Activated B cell treated with CpG ODN at 0.5 μM for 24 hours (primary cell): ENCODE measurements at regions of chr6 and their contacts with region 1.

Region 1: DNA sequence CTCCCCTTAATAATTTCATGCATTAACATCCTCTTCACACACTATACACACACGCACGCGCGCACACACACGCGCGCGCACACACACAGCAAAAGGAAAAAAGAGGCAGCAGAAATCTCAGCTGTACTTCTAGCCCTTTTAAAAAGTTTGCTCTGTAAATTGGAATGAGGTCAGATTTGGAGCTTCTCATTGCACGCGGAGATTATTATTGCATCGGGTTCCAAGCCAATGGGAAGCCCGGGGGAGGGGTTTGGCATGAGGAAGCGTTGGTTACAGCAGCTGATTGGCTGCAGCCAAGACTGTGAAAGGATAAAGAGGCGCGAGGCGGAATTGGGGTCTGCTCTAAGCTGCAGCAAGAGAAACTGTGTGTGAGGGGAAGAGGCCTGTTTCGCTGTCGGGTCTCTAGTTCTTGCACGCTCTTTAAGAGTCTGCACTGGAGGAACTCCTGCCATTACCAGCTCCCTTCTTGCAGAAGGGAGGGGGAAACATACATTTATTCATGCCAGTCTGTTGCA is at the start of gene SOX4:
- DNase-seq: peak; percentile 62
- ATAC-seq: peak; percentile 82
- H3K4me3 Mint-ChIP-seq: no peak within 1 kb of the TSS
- H3K27ac Mint-ChIP-seq: peak within 1 kb of the TSS; percentile 84
- H3K4me1 Mint-ChIP-seq: peaks cover 25% of the 10 kb centered on the region
- H3K27me3 Mint-ChIP-seq: peaks cover 3% of the 10 kb centered on the region
- CTCF ChIP-seq: no peak
- total RNA-seq, gene SOX4: 3.4 and 3.5 TPM in 2 replicates

Region 2: DNA sequence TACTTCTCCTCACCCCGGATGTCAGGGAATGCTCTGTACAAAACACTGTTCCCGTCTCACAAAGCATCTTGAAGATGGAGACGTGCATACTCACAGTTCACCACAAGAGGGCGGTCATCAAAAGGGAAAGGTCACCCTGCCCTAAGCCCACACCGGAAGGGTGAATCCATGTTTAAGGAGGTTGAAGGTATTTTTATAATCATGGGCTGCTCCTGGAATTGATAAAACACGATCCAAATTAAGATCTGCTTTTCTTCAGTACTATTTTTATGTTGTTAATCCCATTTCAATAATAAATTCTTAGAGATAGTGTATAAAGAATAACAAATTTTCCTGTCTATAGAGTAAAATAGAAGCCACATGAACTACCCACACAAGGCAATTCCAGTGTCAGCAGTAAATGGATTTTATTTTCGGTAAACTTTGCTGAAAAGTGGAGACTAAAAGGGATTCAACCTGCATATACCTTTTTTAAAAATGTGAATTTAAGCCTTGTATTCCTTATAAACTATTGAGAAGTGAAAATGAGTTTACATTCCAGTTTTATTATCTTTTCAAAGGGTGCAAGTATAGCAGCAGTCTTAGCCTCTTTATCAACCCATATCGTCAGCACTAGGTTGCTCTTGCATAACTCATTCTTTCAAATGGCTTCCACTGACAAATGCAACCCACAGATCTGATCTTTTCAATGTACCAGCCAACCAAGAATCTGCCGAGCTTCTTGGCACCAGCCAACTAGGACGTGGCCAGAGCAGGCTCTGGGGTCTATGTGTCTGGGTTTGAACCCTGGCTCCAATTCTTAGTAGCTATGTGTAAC is 1301.5 kb before region 1 on chr6:
- CTCF ChIA-PET with region 1: no interaction called
- POLR2A ChIA-PET with region 1: no interaction called
- intact Hi-C with region 1: loop called (anchors 10 kb)
- DNase-seq: peak; percentile 45
- ATAC-seq: peak; percentile 93
- H3K4me3 Mint-ChIP-seq: peak overlapping the region; percentile 8
- H3K27ac Mint-ChIP-seq: no peak overlapping the region
- H3K4me1 Mint-ChIP-seq: peaks cover 3% of the 10 kb centered on the region
- H3K27me3 Mint-ChIP-seq: peaks cover 2% of the 10 kb centered on the region
- CTCF ChIP-seq: peak; percentile 83

Region 3: GRCh38 chr6:20564269-20564668 is 1029.2 kb before region 1 on chr6:
- CTCF ChIA-PET with region 1: interaction called, 125 read pairs
- POLR2A ChIA-PET with region 1: interaction called, 8 read pairs
- intact Hi-C with region 1: loop called (anchors 1 kb)
- DNase-seq: no peak
- ATAC-seq: no peak
- H3K4me3 Mint-ChIP-seq: no peak overlapping the region
- H3K27ac Mint-ChIP-seq: no peak overlapping the region
- H3K4me1 Mint-ChIP-seq: peaks cover 3% of the 10 kb centered on the region
- H3K27me3 Mint-ChIP-seq: no peaks in the 10 kb centered on the region
- CTCF ChIP-seq: peak; percentile 88

Region 4: GRCh38 chr6:20875369-20875963 is 718.0 kb before region 1 on chr6:
- CTCF ChIA-PET with region 1: interaction called, 6 read pairs
- POLR2A ChIA-PET with region 1: interaction called, 3 read pairs
- intact Hi-C with region 1: loop called (anchors 1 kb)
- DNase-seq: no peak
- ATAC-seq: no peak
- H3K4me3 Mint-ChIP-seq: no peak overlapping the region
- H3K27ac Mint-ChIP-seq: no peak overlapping the region
- H3K4me1 Mint-ChIP-seq: peaks cover 6% of the 10 kb centered on the region
- H3K27me3 Mint-ChIP-seq: no peaks in the 10 kb centered on the region
- CTCF ChIP-seq: no peak

Region 5: DNA sequence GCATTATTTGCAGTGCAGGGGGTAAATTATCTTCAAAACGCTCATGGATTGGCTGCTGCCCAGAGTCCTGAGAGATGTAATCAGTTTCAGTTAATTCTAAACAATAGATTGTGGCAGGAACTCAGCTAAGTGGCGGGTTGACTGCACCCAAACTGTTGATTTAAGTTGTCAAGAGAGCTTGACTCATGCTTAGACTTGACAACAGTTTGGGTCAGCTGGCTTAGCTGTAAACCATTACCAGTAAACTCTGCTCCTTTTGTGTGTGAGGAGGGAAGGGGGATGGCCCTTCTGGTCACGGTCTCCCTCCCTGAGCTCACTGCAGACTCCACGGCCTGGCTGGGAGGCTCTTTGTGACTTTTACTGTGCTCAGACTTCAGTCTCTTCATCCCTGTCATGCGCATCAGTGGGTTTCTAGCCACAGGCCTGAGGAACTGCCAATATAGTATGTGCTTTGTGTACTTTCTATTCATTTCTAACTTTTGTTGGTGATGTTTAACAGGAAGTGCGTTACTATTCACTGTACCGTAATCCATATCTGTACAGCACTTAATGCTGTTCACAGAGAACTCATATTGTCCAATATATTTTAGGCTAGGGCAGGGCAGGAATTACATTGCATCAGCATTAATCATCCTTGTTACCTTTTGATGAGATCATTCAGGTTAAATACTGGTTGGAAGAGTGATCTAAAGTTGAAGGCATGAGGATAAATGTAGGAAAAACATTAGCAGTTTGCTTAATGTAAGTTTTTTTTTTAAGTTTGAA is 570.9 kb before region 1 on chr6:
- CTCF ChIA-PET with region 1: interaction called, 3 read pairs
- POLR2A ChIA-PET with region 1: no interaction called
- intact Hi-C with region 1: loop called (anchors 2 kb)
- DNase-seq: peak; percentile 20
- ATAC-seq: peak; percentile 85
- H3K4me3 Mint-ChIP-seq: peak overlapping the region; percentile 58
- H3K27ac Mint-ChIP-seq: peak overlapping the region; percentile 87
- H3K4me1 Mint-ChIP-seq: peaks cover 20% of the 10 kb centered on the region
- H3K27me3 Mint-ChIP-seq: no peaks in the 10 kb centered on the region
- CTCF ChIP-seq: no peak

Region 6: GRCh38 chr6:21438237-21438985 is 155.1 kb before region 1 on chr6:
- CTCF ChIA-PET with region 1: no interaction called
- POLR2A ChIA-PET with region 1: interaction called, 3 read pairs
- intact Hi-C with region 1: loop called (anchors 1 kb)
- DNase-seq: no peak
- ATAC-seq: peak; percentile 89
- H3K4me3 Mint-ChIP-seq: peak overlapping the region; percentile 72
- H3K27ac Mint-ChIP-seq: peak overlapping the region; percentile 87
- H3K4me1 Mint-ChIP-seq: peaks cover 20% of the 10 kb centered on the region
- H3K27me3 Mint-ChIP-seq: no peaks in the 10 kb centered on the region
- CTCF ChIP-seq: no peak

Region 7: DNA sequence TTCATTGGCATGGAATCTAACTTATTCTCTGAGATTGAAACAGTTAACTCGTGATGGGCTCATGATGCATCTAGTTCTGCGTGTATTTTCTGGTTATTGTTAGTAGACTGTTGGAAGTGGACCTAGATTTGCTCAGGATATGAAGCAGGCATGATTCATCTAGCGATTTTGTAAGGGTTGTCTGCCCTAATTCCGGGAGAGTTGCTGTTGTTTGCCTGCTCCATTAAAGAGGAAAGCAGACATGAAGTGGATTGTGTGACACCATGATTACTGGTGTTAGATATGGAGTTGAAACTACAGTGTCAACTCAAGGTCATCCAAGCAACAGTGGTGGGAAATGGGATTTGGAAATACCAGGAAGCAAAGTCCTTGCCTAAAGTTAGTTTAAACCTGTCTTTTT is 41.1 kb after region 1 on chr6:
- CTCF ChIA-PET with region 1: no interaction called
- POLR2A ChIA-PET with region 1: no interaction called
- intact Hi-C with region 1: no loop called
- DNase-seq: no peak
- ATAC-seq: no peak
- H3K4me3 Mint-ChIP-seq: no peak overlapping the region
- H3K27ac Mint-ChIP-seq: no peak overlapping the region
- H3K4me1 Mint-ChIP-seq: no peaks in the 10 kb centered on the region
- H3K27me3 Mint-ChIP-seq: no peaks in the 10 kb centered on the region
- CTCF ChIP-seq: no peak

Region 8: DNA sequence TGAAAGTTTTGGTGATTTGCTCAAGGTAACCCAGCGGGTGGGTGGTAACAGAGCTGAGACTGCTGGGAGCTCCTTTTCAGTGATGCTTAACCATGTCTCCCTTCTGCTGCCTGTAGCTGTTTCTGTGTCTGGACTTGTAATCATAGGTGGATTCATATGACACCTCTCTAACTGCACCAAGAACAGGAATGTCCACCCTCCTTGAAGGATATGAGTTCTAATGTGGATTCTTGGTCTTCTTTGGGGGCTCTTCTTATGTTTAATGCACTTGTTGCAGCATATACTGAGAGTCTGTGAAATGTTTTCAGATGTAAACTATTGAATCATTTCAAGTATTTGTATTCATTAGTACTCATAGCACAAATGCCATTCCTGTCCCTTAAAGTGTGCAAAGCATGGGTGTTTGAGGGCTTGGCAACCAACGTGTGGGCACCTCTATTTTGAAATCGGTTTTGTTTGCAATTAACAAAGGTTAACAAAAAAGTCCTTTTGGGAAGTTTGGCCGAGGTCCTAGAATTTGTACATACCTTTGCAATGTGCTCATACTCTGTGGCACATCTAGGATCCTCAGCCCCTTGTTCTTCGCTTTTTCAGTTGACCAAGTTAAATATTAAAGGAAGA is 138.1 kb after region 1 on chr6:
- CTCF ChIA-PET with region 1: no interaction called
- POLR2A ChIA-PET with region 1: no interaction called
- intact Hi-C with region 1: no loop called
- DNase-seq: no peak
- ATAC-seq: no peak
- H3K4me3 Mint-ChIP-seq: no peak overlapping the region
- H3K27ac Mint-ChIP-seq: no peak overlapping the region
- H3K4me1 Mint-ChIP-seq: no peaks in the 10 kb centered on the region
- H3K27me3 Mint-ChIP-seq: no peaks in the 10 kb centered on the region
- CTCF ChIP-seq: no peak

Region 9: DNA sequence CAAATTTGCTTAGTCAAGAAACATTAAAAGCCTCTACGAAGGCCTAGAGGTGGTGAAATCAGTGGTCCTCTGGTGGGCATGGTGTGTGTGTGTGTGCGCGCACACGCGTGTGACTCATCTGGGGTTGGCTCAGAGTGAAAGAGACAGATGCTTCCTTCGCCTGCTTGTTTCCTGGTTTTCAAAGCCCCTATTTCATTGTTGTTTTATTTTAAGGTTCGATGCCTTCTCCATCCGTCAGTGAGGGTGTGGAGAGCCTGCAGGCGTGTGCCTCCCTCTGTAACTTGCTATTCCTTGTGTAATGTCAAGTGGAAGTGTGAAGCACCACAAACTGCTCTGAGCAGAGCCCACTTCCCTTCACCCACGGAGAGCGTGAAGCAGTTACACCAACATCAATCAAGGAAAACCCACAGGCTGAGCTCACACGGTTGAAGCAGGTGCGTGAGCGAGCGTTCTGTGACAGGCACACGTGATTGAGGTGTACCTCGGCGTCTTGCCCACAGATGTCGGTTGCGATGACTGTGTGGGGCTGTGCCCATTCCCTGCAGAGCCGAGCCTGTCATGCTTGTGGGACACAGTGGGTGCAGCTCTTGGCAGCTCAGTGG is 469.4 kb after region 1 on chr6:
- CTCF ChIA-PET with region 1: no interaction called
- POLR2A ChIA-PET with region 1: no interaction called
- intact Hi-C with region 1: loop called (anchors 10 kb)
- DNase-seq: peak; percentile 28
- ATAC-seq: peak; percentile 79
- H3K4me3 Mint-ChIP-seq: peak overlapping the region; percentile 62
- H3K27ac Mint-ChIP-seq: peak overlapping the region; percentile 84
- H3K4me1 Mint-ChIP-seq: peaks cover 18% of the 10 kb centered on the region
- H3K27me3 Mint-ChIP-seq: no peaks in the 10 kb centered on the region
- CTCF ChIP-seq: no peak